ENCODE measurements at regions of chr22 and their contacts with region 1.

Region 1: DNA sequence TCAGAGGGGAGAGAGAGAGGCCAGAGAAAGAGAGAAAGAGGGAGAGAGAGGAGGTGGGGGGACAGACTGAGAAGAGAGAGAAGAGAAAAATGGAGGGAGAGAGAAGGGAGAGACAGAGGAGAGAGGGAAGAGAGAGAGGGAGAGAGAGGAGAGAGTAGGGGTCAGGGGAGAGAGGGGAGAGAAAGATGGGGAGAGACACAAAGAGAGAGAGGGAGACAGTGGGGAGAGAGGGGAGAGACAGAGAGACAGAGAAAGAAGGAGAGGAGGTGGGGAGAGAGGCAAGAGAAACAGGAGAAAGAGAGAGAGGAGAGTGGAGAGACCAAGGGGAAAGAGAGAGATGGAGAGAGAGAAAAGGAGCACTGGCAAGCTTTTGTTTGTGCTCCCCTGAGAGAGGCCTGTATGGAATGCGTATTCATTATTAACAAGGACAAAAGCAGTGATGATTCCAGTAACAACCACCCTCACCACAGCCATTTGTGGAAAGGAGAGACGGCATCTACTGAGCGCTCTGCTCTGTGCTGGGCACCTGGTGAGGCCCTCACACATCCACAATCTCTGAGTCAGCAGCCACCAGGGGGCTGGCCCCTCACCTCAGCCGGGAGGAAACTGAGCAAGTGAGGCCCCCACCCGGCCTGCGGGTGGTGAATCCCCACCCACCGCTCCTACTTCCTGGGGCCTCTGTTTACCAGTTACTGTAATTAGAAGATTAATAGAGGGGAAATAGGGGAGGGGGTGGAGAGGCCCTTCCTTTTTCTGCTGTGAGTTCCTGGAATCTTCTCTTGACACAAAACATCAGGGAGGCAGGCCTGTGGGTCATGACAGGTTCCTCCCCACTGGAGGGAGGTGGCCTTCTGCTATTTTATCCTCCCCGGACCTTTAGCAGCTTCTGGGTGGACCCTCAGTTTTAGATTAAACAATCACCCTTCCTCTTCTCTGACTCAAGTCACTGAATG is 14.6 kb upstream of the MIAT start:
- DNase-seq: peak; percentile 81
- ATAC-seq: peak; percentile 91
- H3K4me3 Mint-ChIP-seq: peak overlapping the region; percentile 73
- H3K27ac Mint-ChIP-seq: peak overlapping the region; percentile 96
- H3K4me1 Mint-ChIP-seq: peaks cover 67% of the 10 kb centered on the region
- H3K27me3 Mint-ChIP-seq: no peaks in the 10 kb centered on the region

Region 2: DNA sequence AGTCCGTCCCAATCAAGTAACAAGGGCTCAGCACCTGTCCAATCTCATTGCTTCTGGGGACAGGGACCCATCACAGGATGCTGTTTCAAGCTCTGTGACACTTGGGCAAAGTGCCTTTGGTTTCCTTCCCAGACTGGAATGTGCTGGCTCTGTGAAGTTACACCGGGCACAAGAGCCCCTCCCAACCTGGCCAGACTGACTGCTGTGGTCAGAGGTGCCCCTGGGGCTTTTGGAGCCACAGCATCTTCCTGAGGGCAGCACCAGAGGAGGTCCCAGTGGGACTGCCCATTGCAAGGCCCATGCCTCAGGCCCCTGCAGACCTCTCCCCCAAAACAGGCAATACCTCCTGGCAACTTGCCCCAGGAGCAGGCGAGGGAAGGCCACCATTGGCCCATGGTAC is 1233.5 kb before region 1 on chr22:
- POLR2A ChIA-PET with region 1: interaction called, 14 read pairs
- DNase-seq: peak; percentile 27
- ATAC-seq: no peak
- H3K4me3 Mint-ChIP-seq: no peak overlapping the region
- H3K27ac Mint-ChIP-seq: no peak overlapping the region
- H3K4me1 Mint-ChIP-seq: peaks cover 20% of the 10 kb centered on the region
- H3K27me3 Mint-ChIP-seq: peaks cover 5% of the 10 kb centered on the region

Region 3: DNA sequence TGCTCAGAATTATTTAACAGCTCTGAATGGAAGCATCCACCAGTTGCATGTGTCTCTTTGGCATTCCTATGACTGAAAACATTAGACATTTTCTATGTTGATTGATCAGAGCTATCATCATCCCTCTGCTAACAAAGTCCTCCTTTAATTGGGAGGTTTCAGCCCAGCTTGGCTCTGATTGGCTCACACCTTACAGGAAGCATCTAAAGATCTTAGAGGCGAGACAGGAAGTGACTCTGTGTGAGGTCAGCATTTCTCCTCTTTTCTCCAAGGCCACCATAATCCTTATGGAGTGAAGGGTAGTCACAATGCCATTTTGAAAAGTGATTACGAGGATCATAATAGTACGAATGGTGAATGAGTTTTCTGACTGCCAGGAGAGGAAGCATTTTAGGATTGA is 275.5 kb after region 1 on chr22:
- POLR2A ChIA-PET with region 1: no interaction called
- DNase-seq: no peak
- ATAC-seq: no peak
- H3K4me3 Mint-ChIP-seq: no peak overlapping the region
- H3K27ac Mint-ChIP-seq: no peak overlapping the region
- H3K4me1 Mint-ChIP-seq: peaks cover 1% of the 10 kb centered on the region
- H3K27me3 Mint-ChIP-seq: peaks cover 4% of the 10 kb centered on the region